Activated CD4-positive, alpha-beta T cell treated with anti-CD3 and anti-CD28 coated beads, Interleukin-2, amount 10 ng/mL, durations not matched to agents 24 days and 14 days (primary cell): ENCODE measurements at regions of chr1 and their contacts with region 1.

Region 1: DNA sequence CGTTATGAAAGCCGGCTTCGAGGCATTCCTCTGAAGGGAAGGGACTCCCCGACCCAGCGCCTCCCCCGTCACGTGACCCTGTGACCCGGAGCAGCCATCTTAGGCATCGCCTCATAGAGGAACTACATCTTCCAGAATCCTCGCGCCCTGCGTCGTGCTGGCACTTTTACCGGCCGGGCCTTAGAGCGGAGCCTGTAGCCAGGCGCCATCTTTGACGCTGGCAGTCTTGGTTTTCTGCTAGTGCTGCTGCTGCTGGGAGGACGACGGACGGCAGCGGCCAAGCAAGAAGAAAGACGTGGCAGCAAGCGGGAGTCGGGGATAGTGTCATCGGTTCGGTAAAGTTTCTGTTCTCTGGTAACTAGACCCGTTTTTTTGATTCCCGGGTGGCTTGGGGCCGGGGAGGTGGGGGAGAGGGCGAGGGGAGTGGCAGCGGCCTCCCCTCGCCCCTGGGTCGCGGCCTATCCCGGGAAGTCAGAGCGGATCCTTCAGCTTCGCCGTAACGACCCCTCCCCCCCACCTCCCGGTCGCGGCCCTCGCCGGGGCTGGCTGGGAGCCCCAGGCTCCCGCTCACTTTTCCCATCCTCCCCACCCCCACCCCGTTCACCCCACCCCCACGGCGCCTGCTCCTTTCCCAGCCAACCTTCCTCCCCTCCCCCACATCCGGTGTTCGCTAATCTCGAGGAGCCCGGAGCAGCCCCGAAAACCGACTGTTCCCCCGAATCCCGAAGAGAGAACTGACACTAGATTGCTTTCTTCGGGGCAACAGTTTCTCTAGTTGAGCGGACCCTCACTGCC is at the starts of genes ZBED6 and ZC3H11A:
- DNase-seq: peak; percentile 100
- H3K4me3 Mint-ChIP-seq: peak within 1 kb of the TSS; percentile 95
- H3K27ac Mint-ChIP-seq: peak within 1 kb of the TSS; percentile 97
- H3K4me1 Mint-ChIP-seq: peaks cover 39% of the 10 kb centered on the region
- H3K27me3 Mint-ChIP-seq: no peaks in the 10 kb centered on the region
- total RNA-seq, gene ZBED6: 19.1 and 21.1 TPM in 2 replicates
- total RNA-seq, gene ZC3H11A: 82.1 and 83.9 TPM in 2 replicates

Region 2: GRCh38 chr1:203512830-203513611 is 282.6 kb before region 1 on chr1:
- intact Hi-C with region 1: loop called (anchors 5 kb)
- DNase-seq: peak; percentile 71
- H3K4me3 Mint-ChIP-seq: peak overlapping the region; percentile 68
- H3K27ac Mint-ChIP-seq: peak overlapping the region; percentile 96
- H3K4me1 Mint-ChIP-seq: peaks cover 30% of the 10 kb centered on the region
- H3K27me3 Mint-ChIP-seq: peaks cover 2% of the 10 kb centered on the region

Region 3: GRCh38 chr1:203673550-203674427 is 121.8 kb before region 1 on chr1:
- intact Hi-C with region 1: loop called (anchors 5 kb)
- DNase-seq: peak; percentile 92
- H3K4me3 Mint-ChIP-seq: peak overlapping the region; percentile 75
- H3K27ac Mint-ChIP-seq: peak overlapping the region; percentile 96
- H3K4me1 Mint-ChIP-seq: peaks cover 53% of the 10 kb centered on the region
- H3K27me3 Mint-ChIP-seq: no peaks in the 10 kb centered on the region

Region 4: DNA sequence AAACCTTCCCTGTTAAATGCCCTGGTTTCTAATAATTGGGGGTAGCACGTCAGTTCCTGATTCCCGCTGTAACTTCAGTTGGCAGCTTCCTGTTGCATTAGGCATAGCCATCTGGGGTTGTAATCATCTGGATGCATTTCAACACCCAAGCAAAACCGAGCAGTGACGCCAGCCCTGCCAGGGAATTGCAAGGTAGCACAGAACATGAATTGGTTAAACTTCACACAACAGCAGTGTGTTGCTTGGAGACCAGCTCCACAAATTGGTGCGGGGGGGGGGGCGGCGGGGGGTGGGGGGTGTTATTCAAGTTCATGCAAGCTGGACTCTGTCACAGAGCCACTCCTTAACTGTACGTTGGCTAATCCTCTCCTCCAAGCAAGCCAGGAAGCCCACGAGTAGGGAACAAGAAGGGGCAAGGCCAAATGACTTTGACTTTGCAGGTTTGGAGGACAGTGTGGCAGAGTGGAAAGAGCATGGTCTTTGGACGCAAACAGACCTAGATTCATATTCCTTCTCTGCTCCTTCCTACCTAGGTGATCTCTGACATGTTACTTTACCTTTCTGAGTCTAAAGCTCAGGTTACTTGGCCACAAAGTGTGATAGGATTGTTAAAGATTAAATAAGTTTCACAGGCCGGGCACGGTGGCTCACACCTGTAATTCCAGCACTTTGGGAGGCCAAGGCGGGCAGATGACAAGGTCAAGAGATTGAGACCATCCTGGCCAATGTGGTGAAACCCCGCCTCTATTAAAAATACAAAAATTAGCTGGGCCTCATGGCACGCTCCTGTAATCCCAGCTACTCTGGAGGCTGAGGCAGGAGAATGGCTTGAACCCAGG is 25.9 kb before region 1 on chr1:
- intact Hi-C with region 1: loop called (anchors 1 kb)
- DNase-seq: no peak
- H3K4me3 Mint-ChIP-seq: no peak overlapping the region
- H3K27ac Mint-ChIP-seq: peak overlapping the region; percentile 51
- H3K4me1 Mint-ChIP-seq: peaks cover 27% of the 10 kb centered on the region
- H3K27me3 Mint-ChIP-seq: no peaks in the 10 kb centered on the region

Region 5: DNA sequence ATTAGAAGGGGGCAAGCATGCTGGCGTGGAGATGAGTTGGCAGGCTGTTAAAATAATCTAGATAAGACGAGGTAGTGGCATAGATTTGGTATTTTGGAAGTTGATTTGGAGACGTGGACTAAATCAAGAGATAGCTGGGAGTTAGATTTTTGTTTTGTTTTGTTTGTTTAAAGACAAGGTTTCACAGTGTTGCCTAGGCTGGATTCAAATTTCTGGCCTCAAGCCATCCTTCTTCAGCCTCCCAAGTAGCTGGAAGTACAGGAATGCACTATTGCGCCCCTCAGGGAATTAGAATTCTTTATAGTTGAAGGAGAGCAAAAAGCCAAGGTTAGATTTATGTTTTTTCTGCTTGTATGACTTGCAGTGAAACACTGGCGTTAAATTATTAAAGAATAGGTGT is 43.4 kb after region 1 on chr1:
- intact Hi-C with region 1: loop called (anchors 5 kb)
- DNase-seq: no peak
- H3K4me3 Mint-ChIP-seq: no peak overlapping the region
- H3K27ac Mint-ChIP-seq: no peak overlapping the region
- H3K4me1 Mint-ChIP-seq: no peaks in the 10 kb centered on the region
- H3K27me3 Mint-ChIP-seq: no peaks in the 10 kb centered on the region